H1 (cell line): ENCODE measurements at regions of chr17 and their contacts with region 1.

Region 1: GRCh38 chr17:40086150-40087044 is 14.0 kb downstream of the NR1D1 start:
- DNase-seq: peak in 1 of 2 experiments; percentile 94
- H3K4me3 ChIP-seq: no peak overlapping the region
- H3K27ac ChIP-seq: no peak overlapping the region
- H3K4me1 ChIP-seq: peaks cover 0 to 14% (median 0%) of the 10 kb centered on the region in 4 experiments; a peak in 1 of 7 replicates
- H3K27me3 ChIP-seq: no peaks in the 10 kb centered on the region
- CTCF ChIP-seq: peak; percentile 89 to 96 (median 89)
- EP300 ChIP-seq: no peak
- POLR2A ChIP-seq: no peak
- RAD21 ChIP-seq: peak; percentile 95 to 98

Region 2: DNA sequence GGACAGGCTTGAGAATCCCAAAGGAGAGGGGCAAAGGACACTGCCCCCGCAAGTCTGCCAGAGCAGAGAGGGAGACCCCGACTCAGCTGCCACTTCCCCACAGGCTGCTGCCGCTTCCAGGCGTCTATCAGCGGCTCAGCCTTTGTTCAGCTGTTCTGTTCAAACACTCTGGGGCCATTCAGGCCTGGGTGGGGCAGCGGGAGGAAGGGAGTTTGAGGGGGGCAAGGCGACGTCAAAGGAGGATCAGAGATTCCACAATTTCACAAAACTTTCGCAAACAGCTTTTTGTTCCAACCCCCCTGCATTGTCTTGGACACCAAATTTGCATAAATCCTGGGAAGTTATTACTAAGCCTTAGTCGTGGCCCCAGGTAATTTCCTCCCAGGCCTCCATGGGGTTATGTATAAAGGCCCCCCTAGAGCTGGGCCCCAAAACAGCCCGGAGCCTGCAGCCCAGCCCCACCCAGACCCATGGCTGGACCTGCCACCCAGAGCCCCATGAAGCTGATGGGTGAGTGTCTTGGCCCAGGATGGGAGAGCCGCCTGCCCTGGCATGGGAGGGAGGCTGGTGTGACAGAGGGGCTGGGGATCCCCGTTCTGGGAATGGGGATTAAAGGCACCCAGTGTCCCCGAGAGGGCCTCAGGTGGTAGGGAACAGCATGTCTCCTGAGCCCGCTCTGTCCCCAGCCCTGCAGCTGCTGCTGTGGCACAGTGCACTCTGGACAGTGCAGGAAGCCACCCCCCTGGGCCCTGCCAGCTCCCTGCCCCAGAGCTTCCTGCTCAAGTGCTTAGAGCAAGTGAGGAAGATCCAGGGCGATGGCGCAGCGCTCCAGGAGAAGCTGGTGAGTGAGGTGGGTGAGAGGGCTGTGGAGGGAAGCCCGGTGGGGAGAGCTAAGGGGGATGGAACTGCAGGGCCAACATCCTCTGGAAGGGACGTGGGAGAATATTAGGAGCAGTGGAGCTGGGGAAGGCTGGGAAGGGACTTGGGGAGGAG is 71.1 kb before region 1 on chr17 and contains the start of gene CSF3:
- CTCF ChIA-PET with region 1: interaction called, 876 read pairs
- POLR2A ChIA-PET with region 1: interaction called, 5 read pairs
- DNase-seq: no peak
- H3K4me3 ChIP-seq: no peak within 1 kb of the TSS
- H3K27ac ChIP-seq: peak within 1 kb of the TSS; percentile 10; the same call in 1 of the 2 replicates
- H3K4me1 ChIP-seq: peaks cover 0 to 27% (median 18%) of the 10 kb centered on the region in 4 experiments; a peak in 6 of 7 replicates
- H3K27me3 ChIP-seq: peaks cover 0 to 2% (median 0%) of the 10 kb centered on the region in 4 experiments; a peak in 2 of 7 replicates
- CTCF ChIP-seq: no peak
- EP300 ChIP-seq: no peak
- POLR2A ChIP-seq: no peak
- RAD21 ChIP-seq: no peak
- total RNA-seq, gene CSF3: not detected in 2 replicates

Region 3: DNA sequence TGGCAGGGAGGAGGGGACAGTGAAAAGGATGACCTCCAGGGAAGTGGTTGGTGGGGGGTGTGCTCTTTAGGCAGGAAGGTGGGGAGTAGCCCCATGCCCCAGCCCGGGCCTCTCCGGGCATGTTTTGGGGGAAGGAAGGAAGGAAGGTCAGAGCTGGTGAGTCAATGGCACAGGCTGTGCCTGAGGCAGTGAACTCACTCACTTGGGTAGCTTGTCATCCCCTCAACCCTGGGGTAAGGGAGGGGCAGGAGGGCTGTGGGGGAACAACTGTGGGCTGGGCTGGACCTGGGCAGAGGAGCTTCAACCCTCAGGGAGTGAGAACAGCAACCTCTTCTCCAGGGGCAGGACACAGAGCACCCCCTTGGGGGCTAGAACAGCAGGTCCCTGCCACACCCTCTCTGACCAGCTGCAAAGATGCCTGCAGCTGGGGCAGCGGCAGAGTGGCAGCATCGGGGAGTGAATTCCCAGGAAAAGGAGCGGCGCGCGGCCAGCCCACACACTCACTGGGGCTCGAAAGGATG is 64.9 kb before region 1 on chr17:
- CTCF ChIA-PET with region 1: interaction called, 876 read pairs
- POLR2A ChIA-PET with region 1: interaction called, 4 read pairs
- DNase-seq: no peak
- H3K4me3 ChIP-seq: no peak overlapping the region
- H3K27ac ChIP-seq: no peak overlapping the region
- H3K4me1 ChIP-seq: peaks cover 0 to 24% (median 16%) of the 10 kb centered on the region in 4 experiments; a peak in 6 of 7 replicates
- H3K27me3 ChIP-seq: no peaks in the 10 kb centered on the region
- CTCF ChIP-seq: no peak
- EP300 ChIP-seq: no peak
- POLR2A ChIP-seq: no peak
- RAD21 ChIP-seq: no peak

Region 4: DNA sequence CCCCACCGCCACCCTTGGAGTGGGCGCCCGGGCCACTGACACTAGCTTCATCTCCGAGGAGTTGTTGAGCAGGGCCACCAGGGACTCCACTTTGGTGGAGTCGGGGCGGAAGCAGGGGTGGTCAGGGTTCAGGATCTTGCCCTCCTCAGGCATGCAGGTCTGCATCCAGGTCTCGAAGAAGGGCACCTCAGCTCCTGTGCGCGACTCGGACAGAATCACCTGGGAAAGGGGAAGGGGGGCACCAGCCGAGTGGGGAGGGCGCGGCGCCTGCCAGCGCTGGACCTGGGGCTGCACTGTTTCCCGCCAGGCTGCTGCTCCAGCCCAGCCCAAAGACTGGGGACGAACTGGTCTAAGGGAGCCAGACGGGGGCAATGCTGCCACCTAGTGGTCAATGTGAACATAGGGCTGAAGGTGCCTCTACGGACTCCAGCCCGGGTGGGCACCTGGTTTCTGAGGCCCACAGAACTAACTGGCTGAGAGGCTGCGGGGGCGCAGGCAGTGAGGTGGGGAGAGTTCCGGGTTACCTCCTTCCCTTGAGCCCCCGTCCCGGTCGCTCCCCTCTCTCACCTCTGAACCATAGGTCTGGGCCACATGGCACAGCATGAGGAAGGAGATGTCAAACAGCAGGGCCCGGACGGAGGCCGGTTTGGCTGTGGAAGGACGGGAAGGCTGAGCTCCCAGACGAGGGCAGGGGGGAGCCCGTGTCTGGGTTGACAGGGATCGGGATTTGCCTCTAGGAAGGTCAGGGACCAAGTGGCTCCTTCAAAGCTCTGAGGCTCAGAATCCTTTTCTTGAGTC is 59.4 kb before region 1 on chr17:
- CTCF ChIA-PET with region 1: interaction called, 876 read pairs
- POLR2A ChIA-PET with region 1: interaction called, 3 read pairs
- DNase-seq: peak; percentile 68 to 90
- H3K4me3 ChIP-seq: no peak overlapping the region
- H3K27ac ChIP-seq: no peak overlapping the region
- H3K4me1 ChIP-seq: no peaks in the 10 kb centered on the region
- H3K27me3 ChIP-seq: no peaks in the 10 kb centered on the region
- CTCF ChIP-seq: peak; percentile 91 to 97 (median 96)
- EP300 ChIP-seq: no peak
- POLR2A ChIP-seq: no peak
- RAD21 ChIP-seq: peak; percentile 80 to 86

Region 5: GRCh38 chr17:40038882-40039513 is 47.4 kb before region 1 on chr17:
- CTCF ChIA-PET with region 1: interaction called, 876 read pairs
- POLR2A ChIA-PET with region 1: interaction called, 6 read pairs
- DNase-seq: peak in 1 of 2 experiments; percentile 64
- H3K4me3 ChIP-seq: no peak overlapping the region
- H3K27ac ChIP-seq: no peak overlapping the region
- H3K4me1 ChIP-seq: peaks cover 0 to 12% (median 4%) of the 10 kb centered on the region in 4 experiments; a peak in 5 of 7 replicates
- H3K27me3 ChIP-seq: no peaks in the 10 kb centered on the region
- CTCF ChIP-seq: peak; percentile 69 to 78 (median 72)
- EP300 ChIP-seq: no peak
- POLR2A ChIP-seq: no peak
- RAD21 ChIP-seq: peak; percentile 49 to 70

Region 6: DNA sequence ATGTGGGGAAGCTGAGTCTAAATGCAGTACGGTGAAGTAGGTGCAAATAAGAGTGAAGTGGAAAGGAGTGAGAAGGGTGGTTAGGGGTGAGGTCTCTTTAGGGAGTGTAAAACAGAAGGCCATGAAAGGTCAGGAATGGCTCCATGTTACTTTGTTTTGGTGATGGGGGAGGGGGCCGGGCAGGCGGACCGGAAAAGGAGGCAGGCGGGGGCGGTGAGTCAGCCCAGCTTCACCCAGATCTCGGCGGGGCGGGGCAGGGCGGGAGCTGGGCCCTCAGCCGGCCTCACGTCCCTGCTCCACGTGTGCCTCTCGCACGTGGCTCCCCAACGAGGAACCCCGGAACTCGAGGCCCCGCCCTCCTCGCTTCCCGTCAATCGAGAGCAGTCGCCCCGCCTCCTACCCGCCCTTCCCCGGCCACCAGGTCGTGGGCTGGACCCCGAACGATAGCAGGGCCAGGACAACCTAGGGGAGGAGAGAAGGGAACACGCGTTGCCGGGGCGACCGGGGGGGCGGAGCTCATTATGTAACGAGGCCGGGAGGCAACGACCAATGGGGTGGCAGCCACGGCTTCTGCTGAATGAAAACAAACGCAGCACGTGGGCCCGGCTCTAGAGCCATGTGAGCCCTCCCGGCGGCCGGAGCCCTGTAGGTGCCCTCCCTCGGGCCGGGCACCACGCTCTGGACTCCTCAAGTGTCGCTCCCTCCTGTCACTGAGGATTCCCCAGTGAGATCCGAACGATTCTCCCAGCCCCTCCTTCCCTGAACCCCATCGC is 12.6 kb after region 1 on chr17:
- CTCF ChIA-PET with region 1: interaction called, 21 read pairs
- POLR2A ChIA-PET with region 1: interaction called, 22 read pairs
- DNase-seq: peak; percentile 95 to 97
- H3K4me3 ChIP-seq: peak overlapping the region; percentile 48 to 83 (median 63)
- H3K27ac ChIP-seq: 0 out of 2 replicates have a peak overlapping the region, but pooled peaks have one; percentile 25
- H3K4me1 ChIP-seq: peaks cover 14 to 33% (median 23%) of the 10 kb centered on the region in 4 experiments
- H3K27me3 ChIP-seq: peaks cover 6 to 24% (median 16%) of the 10 kb centered on the region in 4 experiments; a peak in 6 of 7 replicates
- CTCF ChIP-seq: no peak
- EP300 ChIP-seq: no peak
- POLR2A ChIP-seq: no peak
- RAD21 ChIP-seq: no peak

Region 7: GRCh38 chr17:40107522-40108174 is 21.3 kb after region 1 on chr17:
- CTCF ChIA-PET with region 1: interaction called, 85 read pairs
- POLR2A ChIA-PET with region 1: interaction called, 399 read pairs
- DNase-seq: peak in 1 of 2 experiments; percentile 62
- H3K4me3 ChIP-seq: peak overlapping the region in 1 of 4 experiments; percentile 13; a peak in 2 of 8 replicates
- H3K27ac ChIP-seq: no peak overlapping the region
- H3K4me1 ChIP-seq: peaks cover 41 to 54% (median 46%) of the 10 kb centered on the region in 4 experiments
- H3K27me3 ChIP-seq: peaks cover 0 to 26% (median 19%) of the 10 kb centered on the region in 4 experiments; a peak in 6 of 7 replicates
- CTCF ChIP-seq: 0 out of 4 replicates have a peak, but pooled peaks of 1 of the 3 experiments have one; percentile 9
- EP300 ChIP-seq: no peak
- POLR2A ChIP-seq: no peak
- RAD21 ChIP-seq: no peak

Region 8: GRCh38 chr17:40264458-40265185 is 178.2 kb after region 1 on chr17:
- CTCF ChIA-PET with region 1: no interaction called
- POLR2A ChIA-PET with region 1: no interaction called
- DNase-seq: no peak
- H3K4me3 ChIP-seq: no peak overlapping the region
- H3K27ac ChIP-seq: no peak overlapping the region
- H3K4me1 ChIP-seq: peaks cover 0 to 2% (median 0%) of the 10 kb centered on the region in 4 experiments; a peak in 1 of 7 replicates
- H3K27me3 ChIP-seq: no peaks in the 10 kb centered on the region
- CTCF ChIP-seq: no peak
- EP300 ChIP-seq: no peak
- POLR2A ChIP-seq: no peak
- RAD21 ChIP-seq: no peak